Gastrocnemius medialis (tissue), 4 donors: ENCODE measurements at regions of chr3 and their contacts with region 1.

Region 1: GRCh38 chr3:57692259-57693147 is at the start of gene DENND6A:
- DNase-seq: peak; percentile 74 to 79
- ATAC-seq: peak; percentile 61 to 72
- H3K4me3 ChIP-seq: peak within 1 kb of the TSS; percentile 67 to 98 (median 83)
- H3K27ac ChIP-seq: peak within 1 kb of the TSS; percentile 87 to 100 (median 94)
- H3K4me1 ChIP-seq: peaks cover 37 to 43% of the 10 kb centered on the region in 2 donors
- H3K27me3 ChIP-seq: no peaks in the 10 kb centered on the region
- CTCF ChIP-seq: peak in 1 of 5 experiments; percentile 45
- POLR2A ChIP-seq: peak; percentile 98
- total RNA-seq, gene DENND6A: 6.4 to 18.9 (median 14.9) TPM

Region 2: DNA sequence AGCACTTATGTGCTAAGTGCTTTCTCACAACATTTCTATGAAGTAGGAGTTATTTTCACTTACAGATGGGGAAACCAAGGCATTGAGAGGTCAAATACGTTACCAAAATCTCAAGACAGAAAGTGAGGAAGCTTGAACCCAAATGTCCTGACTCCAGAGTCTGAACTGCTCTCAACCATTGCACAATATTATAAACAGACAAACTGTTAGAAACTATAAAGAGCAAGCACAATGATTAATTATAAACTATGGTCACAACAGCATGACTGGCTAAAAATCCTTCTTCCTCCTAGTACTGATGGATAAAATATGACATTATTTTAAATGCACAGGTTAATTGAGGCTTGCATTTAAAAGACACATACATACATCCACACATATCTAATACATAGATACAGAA is 322.2 kb before region 1 on chr3:
- in situ Hi-C with region 1: no loop called
- intact Hi-C with region 1: no loop called
- DNase-seq: no peak
- ATAC-seq: no peak
- H3K4me3 ChIP-seq: no peak overlapping the region
- H3K27ac ChIP-seq: no peak overlapping the region
- H3K4me1 ChIP-seq: no peaks in the 10 kb centered on the region
- H3K27me3 ChIP-seq: no peaks in the 10 kb centered on the region
- CTCF ChIP-seq: no peak
- POLR2A ChIP-seq: no peak

Region 3: GRCh38 chr3:57555738-57556458 is 136.6 kb before region 1 on chr3 and contains the start of gene PDE12:
- in situ Hi-C with region 1: no loop called
- intact Hi-C with region 1: loop called (anchors 1 kb)
- DNase-seq: peak; percentile 82 to 85
- ATAC-seq: peak; percentile 96 to 98
- H3K4me3 ChIP-seq: peak within 1 kb of the TSS; percentile 75 to 94 (median 83)
- H3K27ac ChIP-seq: peak within 1 kb of the TSS; percentile 90 to 98 (median 94)
- H3K4me1 ChIP-seq: peaks cover 20 to 28% of the 10 kb centered on the region in 2 donors
- H3K27me3 ChIP-seq: no peaks in the 10 kb centered on the region
- CTCF ChIP-seq: no peak
- POLR2A ChIP-seq: peak; percentile 91 to 92
- total RNA-seq, gene PDE12: 16.5 to 25.7 (median 19.8) TPM

Region 4: GRCh38 chr3:57826245-57826951 is 133.9 kb after region 1 on chr3:
- in situ Hi-C with region 1: no loop called
- intact Hi-C with region 1: loop called (anchors 5 kb)
- DNase-seq: no peak
- ATAC-seq: no peak
- H3K4me3 ChIP-seq: no peak overlapping the region
- H3K27ac ChIP-seq: no peak overlapping the region
- H3K4me1 ChIP-seq: peaks cover 53 to 74% of the 10 kb centered on the region in 2 donors
- H3K27me3 ChIP-seq: no peaks in the 10 kb centered on the region
- CTCF ChIP-seq: no peak
- POLR2A ChIP-seq: no peak

Region 5: GRCh38 chr3:57889807-57890206 is 197.3 kb after region 1 on chr3:
- in situ Hi-C with region 1: no loop called
- intact Hi-C with region 1: loop called (anchors 5 kb)
- DNase-seq: no peak
- ATAC-seq: peak in 1 of 2 donors; percentile 57
- H3K4me3 ChIP-seq: peak overlapping the region; percentile 37 to 48 (median 45)
- H3K27ac ChIP-seq: peak overlapping the region; percentile 81 to 88 (median 86)
- H3K4me1 ChIP-seq: peaks cover 27% of the 10 kb centered on the region in 2 donors
- H3K27me3 ChIP-seq: no peaks in the 10 kb centered on the region
- CTCF ChIP-seq: no peak
- POLR2A ChIP-seq: no peak